ENCODE measurements at regions of chr15 and their contacts with region 1.

Region 1: DNA sequence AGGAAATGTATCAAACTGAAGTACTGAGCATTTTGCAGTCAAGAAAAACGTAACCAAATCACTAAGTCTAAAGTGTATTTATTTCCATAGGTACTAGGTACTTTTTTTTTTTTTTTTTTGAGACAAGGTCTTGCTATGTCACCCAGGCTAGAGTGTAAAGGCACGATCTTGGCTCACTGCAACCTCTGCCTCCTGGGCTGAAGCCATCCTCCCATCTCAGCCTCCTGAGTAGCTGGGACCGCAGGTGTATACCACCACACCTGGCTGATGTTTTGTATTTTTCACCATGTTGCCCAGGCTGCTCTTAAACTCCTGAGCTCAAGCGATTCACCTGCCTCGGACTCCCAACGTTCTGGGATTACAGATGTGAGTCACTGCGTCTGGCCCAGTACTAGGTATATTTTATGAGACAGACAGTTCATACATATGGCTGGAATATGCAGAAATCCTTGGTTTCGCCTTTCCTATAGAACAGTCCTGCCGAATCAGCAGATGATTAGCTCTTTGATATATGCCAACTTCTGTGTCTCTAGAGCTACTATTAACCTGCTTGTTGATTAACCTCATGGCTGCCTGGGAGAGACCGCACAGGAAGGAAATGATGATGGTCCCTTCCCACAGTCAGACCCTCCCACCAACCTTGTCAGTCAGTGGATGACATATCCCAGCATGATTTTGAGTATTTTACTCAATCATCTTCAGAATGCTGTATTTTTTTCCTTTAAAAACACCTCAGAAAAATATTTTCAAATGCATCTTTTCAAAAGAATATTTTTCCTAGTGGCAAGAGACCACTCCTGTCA is 32.3 kb downstream of the TMOD3 start:
- DNase-seq: peak; percentile 79
- H3K4me3 Mint-ChIP-seq: no peak overlapping the region
- H3K27ac Mint-ChIP-seq: peak overlapping the region; percentile 47
- H3K4me1 Mint-ChIP-seq: peaks cover 68% of the 10 kb centered on the region
- H3K27me3 Mint-ChIP-seq: no peaks in the 10 kb centered on the region

Region 2: DNA sequence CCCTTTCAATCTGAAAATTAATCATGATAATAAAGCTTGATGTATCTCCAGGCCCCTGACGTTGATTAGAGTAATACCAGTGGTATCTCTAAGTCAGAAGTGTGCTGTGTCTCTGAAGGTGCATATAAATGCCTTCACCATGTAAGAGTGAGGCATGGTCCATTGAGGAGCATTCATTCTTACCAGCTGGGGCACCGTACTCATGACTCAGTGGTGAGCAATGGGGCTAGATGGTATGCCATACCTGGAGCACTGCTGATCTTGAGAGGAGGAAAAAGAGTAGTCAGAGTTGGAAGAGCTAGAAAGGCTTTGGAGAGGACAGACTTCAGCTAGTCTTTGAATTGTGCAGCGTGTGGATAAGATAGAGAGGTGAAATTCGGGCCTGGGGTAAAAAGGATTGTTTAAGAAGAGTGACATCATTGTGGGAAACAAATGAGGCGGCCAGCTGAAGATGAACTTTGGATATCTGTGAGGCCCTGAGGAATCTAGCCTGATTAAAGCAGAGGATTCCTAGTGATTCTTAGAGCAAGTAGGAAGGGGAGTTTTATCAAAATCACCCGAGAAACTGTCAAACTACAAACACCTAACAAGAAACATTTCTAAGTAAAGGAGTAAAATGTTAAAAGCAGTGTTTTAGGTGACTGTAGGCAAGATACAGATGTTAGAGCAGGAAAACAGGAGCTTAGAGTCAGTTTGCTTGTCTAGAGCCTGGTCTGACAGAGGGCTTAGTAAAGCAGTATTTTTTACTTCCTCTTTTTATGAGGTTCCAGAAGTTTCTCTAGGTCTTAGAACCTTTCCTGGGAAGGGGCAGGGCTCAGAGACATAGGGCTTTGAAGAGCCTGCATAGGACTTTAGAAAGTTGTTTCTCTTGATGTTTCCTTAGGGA is 18.7 kb before region 1 on chr15:
- CTCF ChIA-PET with region 1: interaction called, 3 read pairs
- intact Hi-C with region 1: loop called (anchors 1 kb)
- DNase-seq: peak; percentile 54
- H3K4me3 Mint-ChIP-seq: no peak overlapping the region
- H3K27ac Mint-ChIP-seq: no peak overlapping the region
- H3K4me1 Mint-ChIP-seq: peaks cover 69% of the 10 kb centered on the region
- H3K27me3 Mint-ChIP-seq: no peaks in the 10 kb centered on the region

Region 3: DNA sequence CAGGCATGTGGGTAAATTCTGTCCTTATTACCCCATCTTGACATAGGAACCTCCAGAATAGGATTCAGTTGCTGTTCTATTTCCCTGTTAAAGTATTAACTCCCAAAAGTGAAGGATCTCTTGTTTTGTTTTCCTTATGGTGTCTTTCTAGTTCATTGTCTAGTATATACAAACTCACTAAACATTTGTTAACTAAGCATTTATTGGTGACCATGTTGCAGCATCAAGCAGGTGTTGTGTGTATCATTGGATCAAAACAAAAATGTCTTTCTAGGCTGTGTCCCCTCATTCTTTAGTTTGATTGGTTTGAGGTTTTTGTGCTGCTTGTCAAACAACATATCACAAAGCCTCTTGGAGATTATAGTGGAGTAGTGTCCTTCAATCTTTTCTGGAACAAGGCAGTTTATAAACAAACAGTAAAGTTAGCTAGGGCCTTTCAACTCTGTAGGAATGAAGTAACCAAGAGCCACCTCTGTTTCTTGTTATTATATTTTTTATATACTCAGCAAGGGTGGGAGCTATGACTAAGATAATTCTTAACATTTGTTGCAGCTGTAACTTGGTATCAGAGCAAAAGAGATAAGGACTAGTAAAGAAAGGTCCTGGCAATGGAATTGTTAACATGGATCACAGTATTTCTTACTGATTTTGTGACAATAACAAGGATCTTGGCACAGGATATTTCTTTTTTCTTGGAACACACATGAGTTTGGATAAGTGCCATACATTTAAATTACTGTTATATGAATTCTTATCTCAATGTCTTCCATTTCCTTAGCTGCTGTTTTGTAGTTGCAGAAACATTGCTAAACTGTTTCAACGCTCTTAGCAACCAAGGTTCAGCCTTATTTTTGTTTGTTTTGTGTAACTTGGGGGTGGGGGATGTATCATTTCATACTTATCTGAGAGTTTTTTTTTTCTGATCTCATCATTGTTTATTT is 17.0 kb after region 1 on chr15:
- CTCF ChIA-PET with region 1: interaction called, 3 read pairs
- intact Hi-C with region 1: loop called (anchors 2 kb)
- DNase-seq: no peak
- H3K4me3 Mint-ChIP-seq: no peak overlapping the region
- H3K27ac Mint-ChIP-seq: no peak overlapping the region
- H3K4me1 Mint-ChIP-seq: peaks cover 17% of the 10 kb centered on the region
- H3K27me3 Mint-ChIP-seq: no peaks in the 10 kb centered on the region